CD4-positive, alpha-beta memory T cell (primary cell): ENCODE measurements at regions of chr7 and their contacts with region 1.

Region 1: GRCh38 chr7:5557920-5558401 is 134.3 kb upstream of the TNRC18 start:
- DNase-seq: no peak
- H3K4me3 ChIP-seq: peak overlapping the region in 1 of 2 donors; percentile 69
- H3K4me3 Mint-ChIP-seq: peak overlapping the region; percentile 61 to 97 (median 86)
- H3K27ac ChIP-seq: peak overlapping the region; percentile 64
- H3K27ac Mint-ChIP-seq: peak overlapping the region; percentile 82 to 97 (median 94)
- H3K4me1 ChIP-seq: peaks cover 52% of the 10 kb centered on the region
- H3K4me1 Mint-ChIP-seq: peaks cover 20 to 58% (median 40%) of the 10 kb centered on the region in 4 donors
- H3K27me3 ChIP-seq: peaks cover under 1% of the 10 kb centered on the region
- H3K27me3 Mint-ChIP-seq: peaks cover 2 to 5% of the 10 kb centered on the region in 2 donors

Region 2: GRCh38 chr7:5200561-5201270 is 357.2 kb before region 1 on chr7:
- CTCF ChIA-PET with region 1: no interaction called
- POLR2A ChIA-PET with region 1: no interaction called
- intact Hi-C with region 1: no loop called
- DNase-seq: no peak
- H3K4me3 ChIP-seq: no peak overlapping the region
- H3K4me3 Mint-ChIP-seq: no peak overlapping the region
- H3K27ac ChIP-seq: no peak overlapping the region
- H3K27ac Mint-ChIP-seq: peak overlapping the region in 2 of 7 donors; percentile 35 to 83
- H3K4me1 ChIP-seq: no peaks in the 10 kb centered on the region
- H3K4me1 Mint-ChIP-seq: peaks cover 10 to 17% (median 14%) of the 10 kb centered on the region in 4 donors
- H3K27me3 ChIP-seq: no peaks in the 10 kb centered on the region
- H3K27me3 Mint-ChIP-seq: no peaks in the 10 kb centered on the region

Region 3: GRCh38 chr7:5526100-5526905 is 31.7 kb before region 1 on chr7:
- CTCF ChIA-PET with region 1: interaction called, 52 read pairs
- POLR2A ChIA-PET with region 1: interaction called, 3 read pairs
- intact Hi-C with region 1: no loop called
- DNase-seq: peak in 3 of 5 donors; percentile 33 to 44 (median 43)
- H3K4me3 ChIP-seq: no peak overlapping the region
- H3K4me3 Mint-ChIP-seq: peak overlapping the region; percentile 91 to 99 (median 98)
- H3K27ac ChIP-seq: peak overlapping the region; percentile 69
- H3K27ac Mint-ChIP-seq: peak overlapping the region; percentile 93 to 99 (median 98)
- H3K4me1 ChIP-seq: peaks cover 23% of the 10 kb centered on the region
- H3K4me1 Mint-ChIP-seq: peaks cover 19 to 54% (median 35%) of the 10 kb centered on the region in 4 donors
- H3K27me3 ChIP-seq: no peaks in the 10 kb centered on the region
- H3K27me3 Mint-ChIP-seq: no peaks in the 10 kb centered on the region

Region 4: DNA sequence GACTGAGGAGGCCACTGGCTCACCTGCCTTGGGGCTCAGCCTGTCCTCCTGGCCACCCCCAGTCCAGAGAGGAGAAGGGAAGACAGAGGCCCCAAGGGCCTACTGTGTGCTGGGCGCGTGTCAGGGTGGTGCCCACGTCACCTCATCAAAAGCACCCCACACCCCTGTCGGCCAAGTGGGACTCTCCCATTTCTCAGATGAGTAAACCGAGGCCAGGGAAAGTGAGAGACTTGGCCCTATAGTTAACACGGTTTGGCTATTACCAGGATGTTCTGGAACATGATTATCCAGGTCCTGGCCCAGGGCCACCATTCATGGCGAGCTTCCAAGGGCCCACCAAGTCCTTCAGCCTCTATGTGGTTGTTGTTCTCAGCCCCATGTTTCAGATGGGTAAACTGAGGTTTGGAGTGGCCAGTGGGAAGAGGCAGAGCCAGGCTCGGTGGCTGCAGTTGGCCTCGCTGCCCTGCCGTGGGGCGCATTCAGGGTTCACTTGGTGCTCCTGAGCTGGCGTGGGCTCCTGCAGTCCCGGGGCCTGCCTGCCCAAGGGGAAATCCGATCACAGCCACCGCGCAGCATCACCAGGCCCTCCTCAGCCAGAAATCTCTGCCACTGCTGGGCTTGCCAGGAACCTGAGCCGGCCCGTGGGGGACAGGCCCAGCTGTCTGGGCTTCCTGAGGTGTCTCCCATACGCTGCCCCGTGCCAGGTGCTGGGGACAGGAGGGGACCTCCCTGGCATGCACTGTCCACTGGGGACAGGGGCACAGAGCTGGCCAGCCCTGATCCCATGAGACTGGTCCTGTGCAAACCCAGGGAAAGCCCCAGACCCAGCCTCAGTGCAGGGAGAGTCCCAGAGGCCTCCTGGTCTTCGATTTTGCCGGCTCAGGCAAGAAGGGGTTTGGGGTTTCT is 16.6 kb before region 1 on chr7:
- CTCF ChIA-PET with region 1: interaction called, 12 read pairs
- POLR2A ChIA-PET with region 1: interaction called, 5 read pairs
- intact Hi-C with region 1: no loop called
- DNase-seq: peak in 1 of 5 donors; percentile 22
- H3K4me3 ChIP-seq: no peak overlapping the region
- H3K4me3 Mint-ChIP-seq: no peak overlapping the region
- H3K27ac ChIP-seq: no peak overlapping the region
- H3K27ac Mint-ChIP-seq: no peak overlapping the region
- H3K4me1 ChIP-seq: peaks cover 10% of the 10 kb centered on the region
- H3K4me1 Mint-ChIP-seq: peaks cover 0 to 8% (median 4%) of the 10 kb centered on the region in 4 donors
- H3K27me3 ChIP-seq: no peaks in the 10 kb centered on the region
- H3K27me3 Mint-ChIP-seq: no peaks in the 10 kb centered on the region

Region 5: DNA sequence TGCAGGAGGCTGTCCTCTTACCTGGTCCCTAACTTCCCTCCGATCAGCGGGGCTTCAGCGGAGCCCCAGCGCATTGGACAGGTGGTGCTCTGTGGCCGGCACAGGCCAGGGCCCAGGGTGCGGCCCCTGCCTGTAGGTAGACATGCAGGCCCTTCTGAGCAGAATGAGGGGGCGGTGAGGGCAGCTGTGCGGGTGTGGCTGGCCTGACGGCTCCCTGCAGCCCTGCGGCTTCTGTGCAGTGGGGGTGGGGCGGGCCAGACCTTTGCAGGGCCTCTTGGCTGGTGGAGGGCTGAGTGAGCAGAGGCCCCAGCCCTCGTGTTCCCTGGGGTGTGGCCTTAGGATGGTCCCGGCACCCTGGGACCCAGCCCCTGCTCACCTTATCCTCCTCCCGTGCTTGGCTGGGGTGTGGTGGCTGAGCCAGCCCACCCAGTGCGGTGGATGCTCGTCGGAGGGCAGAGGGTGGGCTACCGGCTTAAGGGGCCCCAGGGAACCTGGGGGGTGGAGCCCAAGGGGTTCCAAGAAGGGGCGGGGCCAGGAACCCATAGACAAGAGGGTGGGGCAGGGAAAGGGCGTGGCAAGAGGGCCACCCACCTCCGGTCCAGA is 40.9 kb after region 1 on chr7:
- CTCF ChIA-PET with region 1: no interaction called
- POLR2A ChIA-PET with region 1: no interaction called
- intact Hi-C with region 1: no loop called
- DNase-seq: no peak
- H3K4me3 ChIP-seq: no peak overlapping the region
- H3K4me3 Mint-ChIP-seq: no peak overlapping the region
- H3K27ac ChIP-seq: no peak overlapping the region
- H3K27ac Mint-ChIP-seq: no peak overlapping the region
- H3K4me1 ChIP-seq: peaks cover 26% of the 10 kb centered on the region
- H3K4me1 Mint-ChIP-seq: peaks cover 8 to 23% (median 16%) of the 10 kb centered on the region in 4 donors
- H3K27me3 ChIP-seq: peaks cover 15% of the 10 kb centered on the region
- H3K27me3 Mint-ChIP-seq: peaks cover 9 to 13% of the 10 kb centered on the region in 2 donors

Region 6: GRCh38 chr7:5750026-5750653 is 192.2 kb after region 1 on chr7:
- CTCF ChIA-PET with region 1: no interaction called
- POLR2A ChIA-PET with region 1: no interaction called
- intact Hi-C with region 1: no loop called
- DNase-seq: no peak
- H3K4me3 ChIP-seq: no peak overlapping the region
- H3K4me3 Mint-ChIP-seq: no peak overlapping the region
- H3K27ac ChIP-seq: no peak overlapping the region
- H3K27ac Mint-ChIP-seq: peak overlapping the region in 1 of 7 donors; percentile 22
- H3K4me1 ChIP-seq: no peaks in the 10 kb centered on the region
- H3K4me1 Mint-ChIP-seq: peaks cover 0 to 14% (median 11%) of the 10 kb centered on the region in 4 donors
- H3K27me3 ChIP-seq: no peaks in the 10 kb centered on the region
- H3K27me3 Mint-ChIP-seq: no peaks in the 10 kb centered on the region